OCI-LY7 (cell line): ENCODE measurements at regions of chr3 and their contacts with region 1.

Region 1: GRCh38 chr3:112111785-112112402 is 21.2 kb downstream of the GCSAM start:
- DNase-seq: peak; percentile 96
- H3K4me3 ChIP-seq: no peak overlapping the region
- H3K27ac ChIP-seq: peak overlapping the region; percentile 99
- H3K4me1 ChIP-seq: peaks cover 83% of the 10 kb centered on the region
- CTCF ChIP-seq: peak; percentile 99

Region 2: DNA sequence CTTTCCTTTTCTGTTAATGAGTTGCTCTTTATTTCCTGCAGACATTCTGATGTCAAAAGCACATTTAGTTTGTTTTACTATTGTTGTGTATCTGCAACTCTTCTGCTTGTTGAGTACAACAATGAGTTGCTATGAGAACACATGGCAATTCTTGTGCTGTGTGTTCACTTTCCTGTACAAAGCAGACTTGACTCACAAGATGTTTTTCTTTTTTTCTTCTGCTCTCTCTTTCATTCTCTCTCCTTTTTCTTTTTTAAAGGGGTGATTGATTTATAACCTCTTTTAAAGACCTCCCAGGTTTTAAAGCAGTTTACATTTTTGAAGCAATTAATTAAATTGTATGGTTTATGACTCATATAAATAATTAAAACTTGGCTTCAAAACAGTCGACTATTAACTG is 164.7 kb before region 1 on chr3:
- CTCF ChIA-PET with region 1: no interaction called
- POLR2A ChIA-PET with region 1: no interaction called
- intact Hi-C with region 1: no loop called
- DNase-seq: no peak
- H3K4me3 ChIP-seq: no peak overlapping the region
- H3K27ac ChIP-seq: no peak overlapping the region
- H3K4me1 ChIP-seq: no peaks in the 10 kb centered on the region
- CTCF ChIP-seq: no peak

Region 3: DNA sequence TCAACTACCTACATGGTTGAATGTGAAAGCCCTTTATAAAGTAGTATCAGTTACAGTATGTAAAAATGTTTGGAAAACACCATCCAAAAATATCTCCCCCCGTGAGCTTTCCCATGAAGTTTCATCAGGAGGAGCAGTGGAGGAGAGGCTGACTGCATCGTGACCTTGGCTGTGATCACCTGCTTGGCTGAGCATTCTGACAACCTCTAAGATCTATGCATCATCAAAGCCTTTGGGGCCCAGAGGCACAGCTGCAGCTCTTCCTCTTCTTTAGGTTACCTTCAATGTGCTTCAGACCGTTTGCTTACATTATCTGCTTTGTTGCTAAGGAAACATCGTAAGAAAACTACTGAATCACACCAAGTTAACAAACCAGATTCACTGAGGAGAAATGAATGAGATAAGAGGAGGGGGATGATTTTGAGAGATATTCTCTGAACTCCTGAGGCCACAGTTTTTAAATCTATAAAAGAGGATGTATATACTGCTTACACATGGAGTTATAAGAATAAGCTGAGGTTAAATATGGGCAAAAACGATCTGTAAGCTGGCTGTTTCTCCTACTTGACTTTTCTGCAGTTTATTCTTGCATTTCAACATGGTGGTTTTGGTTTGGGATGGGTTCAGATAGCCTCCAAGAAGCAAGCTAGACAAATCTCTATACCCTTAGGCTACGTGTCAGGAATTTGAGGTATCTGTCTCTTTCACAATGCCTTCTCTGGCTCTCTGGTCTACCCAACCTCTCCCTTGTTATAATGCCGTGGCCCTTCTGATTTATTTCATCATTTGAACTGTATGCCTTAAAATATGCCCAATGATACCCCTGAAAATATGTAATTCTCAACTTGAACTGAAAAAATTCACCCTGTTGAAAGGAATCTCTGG is 17.2 kb after region 1 on chr3:
- CTCF ChIA-PET with region 1: interaction called, 10 read pairs
- POLR2A ChIA-PET with region 1: interaction called, 566 read pairs
- intact Hi-C with region 1: loop called (anchors 1 kb)
- DNase-seq: peak; percentile 96
- H3K4me3 ChIP-seq: peak overlapping the region; percentile 86
- H3K27ac ChIP-seq: peak overlapping the region; percentile 99
- H3K4me1 ChIP-seq: peaks cover 80% of the 10 kb centered on the region
- CTCF ChIP-seq: no peak

Region 4: DNA sequence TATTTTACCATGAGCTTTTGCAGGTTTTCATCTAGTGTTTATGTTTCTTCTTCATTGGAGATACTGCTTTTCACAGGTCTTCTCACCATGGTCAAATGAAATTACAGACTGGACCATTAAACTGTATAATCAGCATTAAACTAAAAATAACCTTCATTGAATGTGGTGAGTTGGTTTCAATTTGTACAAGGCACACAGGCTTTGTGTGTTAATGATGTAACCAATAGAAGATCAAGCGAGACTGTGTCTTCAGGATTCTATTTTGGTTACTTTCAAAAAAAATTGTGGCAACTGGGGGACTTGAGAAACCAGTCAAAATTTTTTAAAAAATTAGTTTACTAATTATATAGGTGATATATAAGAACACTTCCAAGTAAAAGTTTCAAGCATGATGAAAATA is 75.4 kb after region 1 on chr3:
- CTCF ChIA-PET with region 1: no interaction called
- POLR2A ChIA-PET with region 1: no interaction called
- intact Hi-C with region 1: no loop called
- DNase-seq: no peak
- H3K4me3 ChIP-seq: no peak overlapping the region
- H3K27ac ChIP-seq: no peak overlapping the region
- H3K4me1 ChIP-seq: no peaks in the 10 kb centered on the region
- CTCF ChIP-seq: no peak

Region 5: DNA sequence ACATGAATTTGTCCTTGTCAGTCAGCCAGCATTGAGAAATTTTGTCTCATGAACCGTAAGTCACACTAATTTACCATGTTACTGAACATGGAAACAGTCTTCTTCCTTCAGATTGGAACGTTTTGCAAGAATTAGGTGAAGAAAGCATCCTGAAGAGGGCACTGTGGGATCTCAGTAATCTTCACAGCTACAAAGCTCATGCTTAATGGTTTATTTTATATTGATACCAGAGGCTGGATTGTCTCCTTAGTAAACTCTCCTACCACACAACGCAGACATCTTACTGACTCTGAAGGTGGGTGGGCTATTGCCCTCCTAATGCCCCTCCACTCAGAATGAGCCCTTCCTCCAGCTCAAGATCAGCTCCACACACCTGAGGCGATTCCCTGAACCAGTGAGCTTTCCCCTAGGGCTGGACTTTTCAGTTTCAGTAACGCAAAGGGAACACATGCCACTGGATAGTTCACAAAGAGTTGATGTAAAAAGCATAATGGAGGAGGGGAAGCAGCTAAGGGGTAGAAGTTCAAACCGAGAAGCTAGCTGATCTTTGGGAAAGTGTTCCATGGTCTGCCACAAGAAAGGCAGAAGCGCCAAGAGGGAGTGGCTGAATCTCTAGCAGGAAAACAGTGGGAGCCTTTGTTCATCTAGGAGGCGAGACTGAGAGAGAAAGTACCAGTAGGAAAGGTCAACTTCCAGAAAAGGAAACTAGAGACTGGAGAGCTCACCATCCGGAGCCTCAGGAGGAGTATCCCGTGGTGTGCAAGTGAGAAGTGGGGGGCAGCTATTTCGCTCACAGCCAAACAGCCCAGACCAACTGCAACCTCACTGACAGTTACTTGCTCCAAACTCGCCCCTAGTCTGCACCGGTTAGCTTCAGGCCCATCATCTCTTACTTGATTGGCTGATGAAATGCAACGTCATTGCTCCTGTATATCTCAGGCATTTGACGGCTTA is 181.8 kb after region 1 on chr3 and contains the start of gene SLC9C1:
- CTCF ChIA-PET with region 1: interaction called, 17 read pairs
- POLR2A ChIA-PET with region 1: interaction called, 24 read pairs
- intact Hi-C with region 1: loop called (anchors 1 kb)
- DNase-seq: peak; percentile 86
- H3K4me3 ChIP-seq: peak within 1 kb of the TSS; percentile 13
- H3K27ac ChIP-seq: peak within 1 kb of the TSS; percentile 44
- H3K4me1 ChIP-seq: peaks cover 44% of the 10 kb centered on the region
- CTCF ChIP-seq: peak; percentile 87
- total RNA-seq, gene SLC9C1: not detected in 2 replicates

Region 6: DNA sequence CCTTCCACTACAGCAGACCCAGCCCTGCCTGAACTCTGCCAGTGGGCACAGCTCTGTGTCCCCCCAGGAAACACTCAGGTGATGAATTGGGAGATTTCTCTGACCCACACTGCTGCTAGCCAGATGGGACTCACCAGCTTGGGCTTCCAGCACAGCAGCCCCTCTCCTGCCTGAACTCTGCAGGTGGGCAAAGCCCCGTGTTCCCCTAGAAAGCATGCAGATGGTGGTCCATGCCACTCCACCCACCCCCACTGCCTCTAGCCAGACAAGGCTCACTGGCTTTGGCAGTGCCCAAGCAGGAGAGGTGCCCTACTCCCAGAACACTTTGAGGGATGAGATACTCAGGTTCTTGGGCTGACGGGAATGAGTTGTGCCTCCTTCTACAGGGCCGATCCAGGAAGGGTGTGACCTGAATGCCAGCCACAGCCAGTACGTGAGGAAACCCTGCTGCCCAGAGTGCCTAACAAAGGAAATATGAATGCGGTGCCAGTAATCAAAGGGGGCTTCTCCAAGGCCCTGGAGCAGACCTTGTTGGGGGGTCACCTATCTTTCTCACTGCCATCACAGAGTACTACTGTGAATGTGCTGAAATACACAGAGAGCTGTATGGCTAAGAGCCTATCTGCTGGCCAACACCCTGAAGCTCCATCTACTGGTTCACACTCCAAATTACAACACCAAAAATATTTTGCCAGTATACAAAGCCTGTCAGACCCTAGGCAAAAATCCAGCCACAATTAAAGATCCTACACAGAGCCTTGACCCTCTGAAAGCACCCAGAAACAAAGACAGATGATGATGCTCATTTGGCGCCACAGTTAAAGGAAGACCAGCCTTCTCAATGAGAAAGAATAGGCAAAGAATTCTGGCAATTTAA is 325.5 kb after region 1 on chr3:
- CTCF ChIA-PET with region 1: interaction called, 4 read pairs
- POLR2A ChIA-PET with region 1: interaction called, 6 read pairs
- intact Hi-C with region 1: loop called (anchors 1 kb)
- DNase-seq: peak; percentile 77
- H3K4me3 ChIP-seq: no peak overlapping the region
- H3K27ac ChIP-seq: no peak overlapping the region
- H3K4me1 ChIP-seq: peaks cover 3% of the 10 kb centered on the region
- CTCF ChIP-seq: peak; percentile 82

Region 7: GRCh38 chr3:112519424-112520001 is 407.6 kb after region 1 on chr3:
- CTCF ChIA-PET with region 1: interaction called, 5 read pairs
- POLR2A ChIA-PET with region 1: interaction called, 3 read pairs
- intact Hi-C with region 1: loop called (anchors 1 kb)
- DNase-seq: peak; percentile 81
- H3K4me3 ChIP-seq: no peak overlapping the region
- H3K27ac ChIP-seq: no peak overlapping the region
- H3K4me1 ChIP-seq: no peaks in the 10 kb centered on the region
- CTCF ChIP-seq: peak; percentile 93

Region 8: GRCh38 chr3:112561731-112562688 is 450.1 kb after region 1 on chr3 and contains the starts of genes ATG3 and SLC35A5:
- CTCF ChIA-PET with region 1: interaction called, 3 read pairs
- POLR2A ChIA-PET with region 1: interaction called, 3 read pairs
- intact Hi-C with region 1: loop called (anchors 5 kb)
- DNase-seq: peak; percentile 99
- H3K4me3 ChIP-seq: peak within 1 kb of the TSS; percentile 95
- H3K27ac ChIP-seq: peak within 1 kb of the TSS; percentile 80
- H3K4me1 ChIP-seq: peaks cover 28% of the 10 kb centered on the region
- CTCF ChIP-seq: 0 out of 2 replicates have a peak, but pooled peaks have one; percentile 5
- total RNA-seq, gene ATG3: 84.6 and 109 TPM in 2 replicates
- total RNA-seq, gene SLC35A5: 10.3 and 12.4 TPM in 2 replicates